ENCODE measurements at regions of chr6 and their contacts with region 1.

Region 1: DNA sequence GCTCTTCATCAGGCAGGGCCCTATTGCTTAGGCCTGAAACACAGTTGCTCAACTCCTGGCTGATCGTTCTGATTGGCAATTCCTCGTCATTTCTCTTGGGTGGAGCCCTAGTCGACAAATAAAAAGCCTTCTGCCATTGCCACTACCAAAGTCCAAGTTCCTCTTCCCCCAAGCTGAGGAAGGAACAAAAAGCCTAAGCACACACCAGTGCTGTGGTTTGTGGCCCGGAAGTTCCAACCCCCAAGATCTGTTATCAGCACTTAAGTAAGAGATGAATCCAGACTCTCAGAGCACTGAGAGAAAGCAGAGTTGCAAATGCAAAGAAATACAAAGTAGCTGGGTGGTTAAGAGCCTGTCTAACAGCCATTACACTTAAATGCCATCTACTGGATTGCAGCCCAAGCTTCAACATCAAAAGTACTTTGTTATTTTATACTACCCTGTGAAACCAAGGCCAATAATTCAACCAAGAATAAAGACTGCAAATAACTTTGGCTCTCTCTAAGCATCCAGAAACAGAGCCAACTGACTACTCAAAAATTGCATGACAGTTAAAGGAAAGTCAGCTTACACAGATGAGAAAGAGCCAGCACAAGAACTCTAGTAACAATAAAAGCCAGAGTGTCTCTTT is 1024.0 kb downstream of the GRIK2 start:
- DNase-seq: no peak
- ATAC-seq: 0 out of 3 replicates have a peak, but pooled peaks have one; percentile 22
- H3K4me3 ChIP-seq: no peak overlapping the region
- H3K27ac ChIP-seq: no peak overlapping the region
- H3K4me1 ChIP-seq: no peaks in the 10 kb centered on the region
- H3K27me3 ChIP-seq: no peaks in the 10 kb centered on the region
- CTCF ChIP-seq: no peak
- EP300 ChIP-seq: no peak
- POLR2A ChIP-seq: no peak
- RAD21 ChIP-seq: no peak

Region 2: DNA sequence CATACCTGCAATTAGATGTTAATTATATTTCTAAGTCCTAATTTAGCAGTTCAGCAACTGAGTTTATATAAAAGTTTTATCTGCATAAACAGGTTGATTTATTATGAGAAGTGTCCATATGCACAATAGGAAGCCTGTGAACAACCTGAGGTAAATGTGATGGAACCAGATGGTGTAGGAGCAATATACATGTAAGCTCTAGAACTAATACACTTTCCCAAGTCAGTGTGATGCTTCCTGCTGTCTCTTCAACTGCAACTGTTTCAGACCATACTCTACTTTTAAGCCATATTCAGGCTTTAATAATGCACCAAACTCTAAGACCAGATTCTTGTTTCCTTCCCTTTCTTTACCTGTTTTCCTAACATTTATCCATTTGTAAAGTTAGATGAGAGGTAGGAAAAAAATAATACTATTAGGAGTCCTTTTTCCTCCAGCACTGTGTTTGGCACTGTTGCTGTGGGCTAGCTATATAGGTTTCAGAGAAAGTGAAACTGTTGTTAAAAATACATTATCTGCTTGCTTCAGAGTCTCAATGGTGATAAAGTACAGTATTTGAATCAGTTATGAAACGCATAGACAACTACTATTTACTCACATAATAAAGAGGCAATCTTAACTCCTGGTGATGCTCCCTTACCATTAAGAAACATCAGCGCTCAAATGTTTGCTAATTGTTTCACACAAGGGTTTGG is 14.7 kb before region 1 on chr6:
- CTCF ChIA-PET with region 1: no interaction called
- POLR2A ChIA-PET with region 1: no interaction called
- RAD21 ChIA-PET with region 1: no interaction called
- SMC1A ChIA-PET with region 1: interaction called, 12 read pairs
- in situ Hi-C with region 1: no loop called
- intact Hi-C with region 1: no loop called
- DNase-seq: no peak
- ATAC-seq: peak; percentile 82
- H3K4me3 ChIP-seq: no peak overlapping the region
- H3K27ac ChIP-seq: no peak overlapping the region
- H3K4me1 ChIP-seq: no peaks in the 10 kb centered on the region
- H3K27me3 ChIP-seq: no peaks in the 10 kb centered on the region
- CTCF ChIP-seq: no peak
- EP300 ChIP-seq: no peak
- POLR2A ChIP-seq: no peak
- RAD21 ChIP-seq: no peak

Measured in GM12878 (cell line).